ENCODE measurements at regions of chr5 and their contacts with region 1.

Region 1: GRCh38 chr5:10536931-10537579 is 26.8 kb upstream of the ANKRD33B start:
- DNase-seq: no peak
- ATAC-seq: peak; percentile 79
- H3K4me3 Mint-ChIP-seq: peak overlapping the region; percentile 76
- H3K27ac Mint-ChIP-seq: peak overlapping the region; percentile 75
- H3K4me1 Mint-ChIP-seq: peaks cover 26% of the 10 kb centered on the region
- H3K27me3 Mint-ChIP-seq: peaks cover 2% of the 10 kb centered on the region
- CTCF ChIP-seq: no peak

Region 2: GRCh38 chr5:10377081-10377480 is 160.0 kb before region 1 on chr5:
- CTCF ChIA-PET with region 1: no interaction called
- POLR2A ChIA-PET with region 1: no interaction called
- intact Hi-C with region 1: no loop called
- DNase-seq: no peak
- ATAC-seq: no peak
- H3K4me3 Mint-ChIP-seq: no peak overlapping the region
- H3K27ac Mint-ChIP-seq: no peak overlapping the region
- H3K4me1 Mint-ChIP-seq: peaks cover 38% of the 10 kb centered on the region
- H3K27me3 Mint-ChIP-seq: no peaks in the 10 kb centered on the region
- CTCF ChIP-seq: no peak

Region 3: DNA sequence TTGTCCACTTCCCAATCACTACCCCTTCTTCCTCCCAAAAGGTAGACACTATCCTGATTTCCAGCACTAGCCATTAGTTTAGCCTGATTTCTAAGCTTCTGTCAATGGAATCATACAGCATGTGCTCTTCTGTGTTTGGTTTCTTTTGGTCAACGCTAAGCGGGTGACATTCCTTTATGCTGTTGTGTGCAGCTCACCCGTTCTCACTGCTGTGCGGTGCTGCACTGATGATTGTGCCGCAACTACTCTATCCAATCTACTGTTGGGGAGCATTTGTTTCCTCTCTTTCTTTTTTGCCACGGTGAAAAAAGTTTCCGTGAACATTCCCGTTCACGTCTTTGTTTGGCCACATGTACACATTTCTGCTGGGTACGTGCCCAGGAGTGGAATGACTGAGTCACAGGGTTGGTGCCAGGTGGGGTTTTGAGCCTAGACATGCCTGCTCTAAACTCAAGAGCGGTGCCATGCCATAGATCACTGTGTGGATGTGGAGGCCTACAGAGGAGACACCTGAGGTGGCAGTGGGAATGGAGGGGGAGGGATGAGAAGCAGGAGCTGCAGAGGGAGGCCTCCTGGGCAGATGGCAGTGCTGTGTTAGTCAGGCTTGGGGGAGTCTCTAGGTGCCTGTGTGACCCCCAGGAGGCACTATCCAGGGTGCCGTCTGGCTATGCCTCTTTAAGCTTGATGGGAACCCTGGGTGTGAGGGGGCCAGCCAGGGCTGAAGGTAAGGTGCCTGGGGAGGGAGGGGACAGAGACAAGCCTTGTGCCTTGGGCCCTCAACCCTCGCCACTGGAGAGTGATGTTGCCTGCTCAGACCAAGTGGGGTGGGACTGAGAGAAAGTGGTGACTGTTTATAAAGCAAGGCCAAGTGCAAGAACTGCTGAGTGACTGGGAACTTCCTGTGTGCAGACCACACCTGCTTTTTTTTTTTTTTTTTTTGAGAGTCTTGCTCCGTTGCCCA is 15.4 kb after region 1 on chr5:
- CTCF ChIA-PET with region 1: no interaction called
- POLR2A ChIA-PET with region 1: interaction called, 9 read pairs
- intact Hi-C with region 1: loop called (anchors 2 kb)
- DNase-seq: no peak
- ATAC-seq: peak; percentile 87
- H3K4me3 Mint-ChIP-seq: peak overlapping the region; percentile 15
- H3K27ac Mint-ChIP-seq: peak overlapping the region; percentile 46
- H3K4me1 Mint-ChIP-seq: peaks cover 48% of the 10 kb centered on the region
- H3K27me3 Mint-ChIP-seq: no peaks in the 10 kb centered on the region
- CTCF ChIP-seq: no peak

Region 4: GRCh38 chr5:10607666-10608073 is 70.6 kb after region 1 on chr5:
- CTCF ChIA-PET with region 1: no interaction called
- POLR2A ChIA-PET with region 1: interaction called, 4 read pairs
- intact Hi-C with region 1: loop called (anchors 1 kb)
- DNase-seq: no peak
- ATAC-seq: peak; percentile 35
- H3K4me3 Mint-ChIP-seq: peak overlapping the region; percentile 80
- H3K27ac Mint-ChIP-seq: peak overlapping the region; percentile 90
- H3K4me1 Mint-ChIP-seq: peaks cover 67% of the 10 kb centered on the region
- H3K27me3 Mint-ChIP-seq: no peaks in the 10 kb centered on the region
- CTCF ChIP-seq: no peak

Measured in activated B cell treated with CpG ODN at 0.5 μM for 24 hours (primary cell).